Transverse colon (tissue), 4 donors: ENCODE measurements at regions of chr2 and their contacts with region 1.

Region 1: DNA sequence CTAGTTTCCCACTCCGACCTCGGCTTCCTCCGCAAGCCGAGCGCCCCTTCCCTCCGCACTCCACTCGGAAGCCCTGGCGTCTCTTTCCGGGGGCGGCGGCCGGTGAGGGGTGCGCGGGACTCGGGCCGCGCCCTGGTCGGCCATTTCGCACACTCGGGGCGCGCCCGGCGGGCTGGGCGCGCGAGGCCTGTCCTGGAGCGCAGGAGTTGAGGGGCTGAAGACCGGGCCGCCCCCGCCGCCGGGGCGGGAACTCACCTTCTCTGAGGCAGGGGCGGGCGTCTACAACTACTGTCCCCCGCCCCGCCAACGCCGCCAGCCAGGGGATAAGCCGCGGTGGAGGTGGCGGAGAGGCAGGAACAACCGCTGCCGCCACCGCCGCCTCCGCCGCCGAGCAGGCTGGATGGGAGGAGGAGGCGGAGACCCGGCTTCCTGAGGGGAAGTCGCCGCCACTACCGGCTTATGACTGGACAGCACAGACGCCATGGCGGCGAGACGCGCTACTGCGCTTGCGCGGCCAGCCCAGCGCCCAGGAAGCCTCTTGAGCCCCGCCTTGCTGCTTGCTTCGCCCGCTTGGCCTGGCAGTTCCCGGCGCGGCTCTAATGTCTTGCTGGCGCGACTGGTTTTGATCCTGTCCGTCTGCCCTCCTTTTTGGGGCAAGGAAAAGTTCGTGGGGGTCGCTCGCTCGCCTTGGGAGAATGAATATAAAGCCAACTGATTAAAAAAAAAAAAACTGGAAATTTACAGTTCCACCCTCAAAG is at the start of gene KRCC1:
- DNase-seq: peak; percentile 97
- H3K4me3 ChIP-seq: peak within 1 kb of the TSS; percentile 82 to 99 (median 97)
- H3K27ac ChIP-seq: peak within 1 kb of the TSS; percentile 98 to 100 (median 100)
- H3K4me1 ChIP-seq: peaks cover 11 to 42% (median 29%) of the 10 kb centered on the region in 4 donors
- H3K27me3 ChIP-seq: no peaks in the 10 kb centered on the region
- CTCF ChIP-seq: peak in 3 of 5 experiments; percentile 13 to 34 (median 33)
- EP300 ChIP-seq: no peak
- POLR2A ChIP-seq: peak; percentile 97
- total RNA-seq, gene KRCC1: 12.3 to 40.6 (median 27.6) TPM

Region 2: DNA sequence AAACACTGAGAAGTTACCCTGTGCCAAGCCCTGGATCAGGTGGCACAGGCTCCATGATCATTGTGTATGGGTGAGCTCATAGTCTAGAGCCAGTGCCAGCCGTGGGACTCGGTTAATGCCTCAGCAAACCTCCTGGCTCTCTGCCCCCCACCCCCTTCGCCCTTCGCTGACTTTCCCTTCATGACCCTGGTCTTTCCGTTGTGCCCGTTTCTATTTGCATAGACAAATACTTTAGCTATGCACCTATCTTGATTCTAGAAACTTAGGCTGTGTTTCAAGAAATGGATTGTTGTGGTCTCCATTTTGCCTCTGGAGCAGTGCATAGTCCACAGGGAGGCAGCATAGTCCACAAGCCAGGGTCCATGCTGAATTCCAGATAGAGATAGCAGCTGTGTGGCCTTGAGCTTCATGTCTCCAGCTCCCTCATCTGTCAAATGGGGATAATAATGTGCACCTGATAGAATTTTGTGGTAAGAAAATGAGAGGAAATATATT is 1659.2 kb before region 1 on chr2:
- in situ Hi-C with region 1: no loop called
- intact Hi-C with region 1: no loop called
- DNase-seq: peak; percentile 24
- H3K4me3 ChIP-seq: no peak overlapping the region
- H3K27ac ChIP-seq: no peak overlapping the region
- H3K4me1 ChIP-seq: peaks cover 4 to 14% (median 12%) of the 10 kb centered on the region in 4 donors
- H3K27me3 ChIP-seq: no peaks in the 10 kb centered on the region
- CTCF ChIP-seq: peak in 2 of 5 experiments; percentile 10 to 17
- EP300 ChIP-seq: no peak
- POLR2A ChIP-seq: no peak

Region 3: GRCh38 chr2:88003074-88003755 is 52.3 kb before region 1 on chr2:
- in situ Hi-C with region 1: no loop called
- intact Hi-C with region 1: no loop called
- DNase-seq: no peak
- H3K4me3 ChIP-seq: no peak overlapping the region
- H3K27ac ChIP-seq: no peak overlapping the region
- H3K4me1 ChIP-seq: peaks cover 0 to 5% (median 0%) of the 10 kb centered on the region in 4 donors
- H3K27me3 ChIP-seq: peaks cover 3% of the 10 kb centered on the region
- CTCF ChIP-seq: no peak
- EP300 ChIP-seq: no peak
- POLR2A ChIP-seq: no peak

Region 4: DNA sequence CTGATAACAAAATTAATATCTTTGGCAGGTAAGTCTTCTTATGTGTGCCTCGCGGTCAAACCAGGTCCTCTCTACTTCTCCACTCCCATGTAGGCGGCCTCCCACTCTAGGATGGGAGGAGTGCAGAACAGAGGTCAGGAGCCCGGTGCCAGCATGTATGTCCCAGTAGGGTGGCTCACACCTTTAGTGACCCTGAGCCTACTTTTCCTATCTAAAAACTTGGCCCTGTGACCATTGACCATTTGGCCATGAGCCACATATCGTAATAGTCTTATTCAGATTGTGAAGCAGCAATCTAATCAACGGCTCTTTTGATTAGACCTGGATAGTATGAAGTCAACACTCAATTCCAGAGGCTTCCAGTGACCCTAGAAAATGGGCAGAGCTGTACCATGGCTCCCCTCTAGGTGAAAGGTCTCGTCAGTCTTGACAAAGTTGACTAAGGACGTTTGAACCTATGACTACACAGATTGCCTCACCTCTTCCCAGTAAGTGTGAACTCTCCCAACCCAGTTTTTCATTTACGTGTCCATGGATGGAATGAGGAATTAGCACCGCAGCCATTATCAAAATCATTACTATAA is 89.5 kb after region 1 on chr2:
- in situ Hi-C with region 1: loop called in 2 of 4 experiments (anchors 10 kb)
- intact Hi-C with region 1: no loop called
- DNase-seq: peak; percentile 88
- H3K4me3 ChIP-seq: no peak overlapping the region
- H3K27ac ChIP-seq: peak overlapping the region; percentile 78 to 83 (median 83)
- H3K4me1 ChIP-seq: peaks cover 5 to 40% (median 25%) of the 10 kb centered on the region in 4 donors
- H3K27me3 ChIP-seq: no peaks in the 10 kb centered on the region
- CTCF ChIP-seq: peak in 2 of 5 experiments; percentile 22 to 23
- EP300 ChIP-seq: peak; percentile 51
- POLR2A ChIP-seq: peak; percentile 64

Region 5: DNA sequence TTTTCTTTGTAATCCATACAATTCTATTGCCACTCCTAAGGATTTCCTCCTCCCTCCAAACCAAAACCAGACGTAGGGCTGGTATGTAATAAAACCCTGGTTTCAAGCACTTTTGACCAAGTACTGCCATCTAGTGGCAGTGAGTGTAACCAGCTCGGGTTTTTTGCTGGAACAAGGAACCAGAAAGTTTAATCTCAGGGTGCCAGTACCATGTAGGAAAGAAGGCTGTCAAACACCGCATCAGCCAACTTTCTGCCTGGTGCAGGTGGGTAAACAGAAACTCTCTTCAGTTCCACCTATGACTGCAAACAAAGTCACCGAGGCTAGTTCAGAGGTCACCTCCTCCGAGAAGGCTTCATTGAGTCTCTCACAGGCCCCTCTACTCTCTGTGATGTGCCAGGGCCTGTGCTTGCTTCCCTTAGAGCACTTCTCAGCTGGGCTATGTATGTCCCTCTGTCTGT is 104.4 kb after region 1 on chr2:
- in situ Hi-C with region 1: loop called (anchors 5 to 10 kb)
- intact Hi-C with region 1: loop called (anchors 1 kb)
- DNase-seq: peak; percentile 75
- H3K4me3 ChIP-seq: no peak overlapping the region
- H3K27ac ChIP-seq: peak overlapping the region in 3 of 4 donors; percentile 17 to 48 (median 28)
- H3K4me1 ChIP-seq: peaks cover 0 to 10% (median 2%) of the 10 kb centered on the region in 4 donors
- H3K27me3 ChIP-seq: no peaks in the 10 kb centered on the region
- CTCF ChIP-seq: peak; percentile 83 to 93 (median 86)
- EP300 ChIP-seq: no peak
- POLR2A ChIP-seq: no peak